ENCODE measurements at regions of chr1 and their contacts with region 1.

Region 1: DNA sequence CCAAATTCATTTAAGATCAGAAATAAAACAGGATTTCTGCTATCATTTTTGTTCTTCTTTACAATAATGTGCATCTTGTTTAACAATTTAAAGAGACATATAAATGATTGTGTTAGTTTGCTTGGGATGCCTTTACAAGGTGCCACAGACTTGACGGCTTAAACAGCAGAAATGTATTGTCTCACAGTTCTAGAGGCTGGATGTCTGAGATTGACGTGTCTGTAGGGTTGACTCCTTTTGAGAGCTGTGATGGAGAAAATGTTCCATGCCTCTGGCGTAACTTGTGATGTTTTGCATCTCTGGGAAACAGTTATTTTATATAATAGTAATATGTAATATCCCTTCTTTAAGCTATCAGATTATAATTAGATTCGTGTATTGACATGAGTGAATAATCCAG is 1091.6 kb upstream of the PRMT6 start:
- DNase-seq: no peak
- H3K4me3 ChIP-seq: no peak overlapping the region
- H3K27ac ChIP-seq: no peak overlapping the region
- H3K4me1 ChIP-seq: no peaks in the 10 kb centered on the region
- H3K27me3 ChIP-seq: no peaks in the 10 kb centered on the region
- CTCF ChIP-seq: no peak

Region 2: DNA sequence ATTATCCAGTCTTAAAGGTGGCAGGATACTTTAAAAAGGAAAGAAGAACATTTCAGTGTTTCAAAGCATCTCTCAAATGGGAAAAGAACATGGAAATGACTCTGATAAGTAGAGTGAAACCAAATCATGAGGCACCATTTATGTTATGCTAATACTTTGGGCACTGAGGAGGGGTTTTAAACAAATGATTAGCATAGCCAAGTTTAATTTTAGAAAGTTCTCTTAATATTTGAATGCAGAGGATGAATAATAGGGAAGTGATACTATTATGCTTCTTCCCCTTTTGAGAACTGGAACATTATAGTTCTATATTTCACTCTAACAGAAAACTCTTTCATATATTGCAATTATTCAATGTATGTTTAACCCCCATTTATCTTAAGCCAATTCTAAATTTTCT is 90.3 kb before region 1 on chr1:
- CTCF ChIA-PET with region 1: no interaction called
- dilution Hi-C with region 1: no loop called
- in situ Hi-C with region 1: loop called in 1 of 2 experiments (anchors 25 kb)
- intact Hi-C with region 1: no loop called
- DNase-seq: no peak
- H3K4me3 ChIP-seq: no peak overlapping the region
- H3K27ac ChIP-seq: no peak overlapping the region
- H3K4me1 ChIP-seq: no peaks in the 10 kb centered on the region
- H3K27me3 ChIP-seq: no peaks in the 10 kb centered on the region
- CTCF ChIP-seq: no peak

Region 3: DNA sequence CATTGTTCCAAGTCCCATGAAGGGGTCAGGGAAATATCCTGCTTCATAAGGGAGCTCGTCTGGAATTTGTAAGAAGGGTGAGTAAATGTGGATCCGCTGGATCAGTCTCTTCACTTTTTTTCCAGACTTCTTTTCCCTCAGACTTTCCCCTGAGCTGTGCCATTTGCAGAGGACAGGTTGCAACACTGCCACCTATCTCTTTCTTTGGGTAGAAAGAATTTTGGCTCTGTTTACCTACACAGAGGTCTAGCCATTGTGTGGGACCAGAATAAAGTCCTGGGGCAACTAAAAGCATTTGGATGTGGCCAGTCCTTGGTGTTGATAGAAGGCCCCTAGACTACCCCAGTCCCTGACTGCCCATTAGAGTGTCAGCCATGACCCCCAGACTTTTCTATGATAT is 55.1 kb before region 1 on chr1:
- CTCF ChIA-PET with region 1: no interaction called
- dilution Hi-C with region 1: no loop called
- in situ Hi-C with region 1: no loop called
- intact Hi-C with region 1: no loop called
- DNase-seq: no peak
- H3K4me3 ChIP-seq: no peak overlapping the region
- H3K27ac ChIP-seq: no peak overlapping the region
- H3K4me1 ChIP-seq: no peaks in the 10 kb centered on the region
- H3K27me3 ChIP-seq: no peaks in the 10 kb centered on the region
- CTCF ChIP-seq: no peak

Region 4: DNA sequence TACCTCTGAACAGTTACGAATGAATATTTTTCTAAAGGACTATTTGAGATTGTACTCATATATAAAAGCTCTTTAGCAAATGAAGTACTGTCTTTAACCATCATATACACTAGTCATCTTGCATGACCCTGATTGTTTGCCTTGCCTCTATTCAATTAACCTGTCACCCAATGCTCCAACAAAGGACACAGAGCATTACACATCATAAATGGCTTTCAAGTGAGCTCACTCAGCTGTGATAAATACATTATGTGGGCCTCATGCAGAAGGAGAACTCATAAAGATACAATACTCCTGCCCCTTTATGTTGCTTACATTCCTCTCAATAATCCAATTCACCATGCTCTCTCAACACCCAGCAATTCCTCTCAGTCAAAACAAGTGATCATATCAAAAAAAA is 98.6 kb after region 1 on chr1:
- CTCF ChIA-PET with region 1: no interaction called
- dilution Hi-C with region 1: no loop called
- in situ Hi-C with region 1: no loop called
- intact Hi-C with region 1: no loop called
- DNase-seq: no peak
- H3K4me3 ChIP-seq: no peak overlapping the region
- H3K27ac ChIP-seq: no peak overlapping the region
- H3K4me1 ChIP-seq: no peaks in the 10 kb centered on the region
- H3K27me3 ChIP-seq: no peaks in the 10 kb centered on the region
- CTCF ChIP-seq: no peak

Region 5: DNA sequence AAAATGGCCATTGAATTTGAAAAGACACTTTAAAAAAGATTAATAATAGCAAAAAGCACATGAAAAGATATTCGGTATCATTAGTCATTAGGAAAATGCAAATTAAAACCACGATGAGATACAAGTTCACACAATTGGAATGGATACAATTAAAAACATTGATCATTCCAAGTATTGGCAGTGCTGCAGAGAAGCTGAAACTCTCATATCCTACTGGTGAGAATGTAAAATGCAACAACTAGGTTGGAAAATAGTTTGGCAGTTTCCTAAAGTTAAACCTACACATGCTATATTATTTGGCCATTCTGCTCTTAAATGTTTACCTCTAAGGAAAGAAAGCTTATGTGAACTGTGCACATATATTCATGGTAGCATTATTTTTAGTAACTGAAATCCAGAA is 252.9 kb after region 1 on chr1:
- CTCF ChIA-PET with region 1: no interaction called
- dilution Hi-C with region 1: no loop called
- in situ Hi-C with region 1: no loop called
- intact Hi-C with region 1: no loop called
- DNase-seq: no peak
- H3K4me3 ChIP-seq: no peak overlapping the region
- H3K27ac ChIP-seq: no peak overlapping the region
- H3K4me1 ChIP-seq: no peaks in the 10 kb centered on the region
- H3K27me3 ChIP-seq: no peaks in the 10 kb centered on the region
- CTCF ChIP-seq: peak; percentile 19 to 23

Region 6: DNA sequence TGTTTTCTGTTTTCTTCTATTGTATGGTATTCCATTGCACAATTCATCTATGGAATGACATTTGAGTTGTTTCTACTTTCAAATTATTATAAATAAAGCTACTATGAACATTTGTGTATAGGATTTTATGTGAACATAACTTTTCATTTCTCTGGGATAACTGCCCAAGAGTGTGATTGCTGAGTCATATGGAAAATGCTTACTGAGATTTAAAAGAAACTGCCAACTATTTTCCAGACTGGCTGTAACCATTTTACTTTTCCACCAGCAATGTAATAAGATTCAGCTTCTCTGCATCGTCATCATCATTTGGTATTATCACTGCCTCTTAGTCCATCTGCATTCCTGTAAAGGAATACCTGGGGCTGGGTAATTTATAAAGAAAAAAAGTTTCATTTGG is 312.0 kb after region 1 on chr1:
- CTCF ChIA-PET with region 1: no interaction called
- dilution Hi-C with region 1: no loop called
- in situ Hi-C with region 1: no loop called
- intact Hi-C with region 1: no loop called
- DNase-seq: no peak
- H3K4me3 ChIP-seq: no peak overlapping the region
- H3K27ac ChIP-seq: no peak overlapping the region
- H3K4me1 ChIP-seq: no peaks in the 10 kb centered on the region
- H3K27me3 ChIP-seq: no peaks in the 10 kb centered on the region
- CTCF ChIP-seq: no peak

Measured in mammary epithelial cell (primary cell).